ENCODE measurements at regions of chr17 and their contacts with region 1.

Region 1: DNA sequence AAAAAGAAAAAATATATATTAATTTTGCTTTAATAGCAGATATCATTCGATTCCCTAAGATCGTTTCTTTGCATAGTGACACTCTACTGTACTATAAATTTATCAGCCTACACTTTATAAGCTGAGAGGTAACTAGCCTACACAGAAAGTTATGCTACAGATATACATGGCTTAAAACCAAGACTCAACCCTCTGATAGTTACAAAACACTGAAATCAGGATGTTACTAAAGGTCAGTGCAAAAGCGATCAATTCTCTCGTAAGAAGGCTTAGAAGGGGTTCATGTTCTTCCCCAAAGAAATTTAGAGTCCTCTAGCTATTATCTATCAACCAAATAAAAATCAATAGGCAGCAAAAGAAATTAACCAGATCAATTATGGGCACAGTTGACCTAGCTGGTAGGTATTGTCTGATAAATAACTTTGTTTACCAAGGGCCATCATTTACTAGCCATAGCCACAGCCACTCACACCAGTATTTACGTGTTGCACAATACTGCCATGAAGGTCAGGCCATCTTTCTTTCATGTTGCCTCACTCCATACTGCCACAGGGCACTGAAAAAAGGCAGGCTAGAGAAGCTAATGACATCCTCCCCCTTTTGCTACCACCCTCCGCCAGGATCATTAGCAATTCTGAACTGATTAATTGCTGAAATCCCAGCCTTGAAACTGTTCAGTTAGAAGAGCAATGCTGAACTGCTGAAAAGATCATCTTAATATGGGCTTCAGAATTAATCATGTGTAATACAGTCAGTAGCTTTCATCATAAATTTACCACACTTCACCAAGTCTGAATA is 43.7 kb downstream of the RND2 start:
- DNase-seq: no peak
- ATAC-seq: peak in 5 of 8 donors; percentile 25 to 90 (median 72)
- H3K4me3 ChIP-seq: no peak overlapping the region
- H3K27ac ChIP-seq: peak overlapping the region in 7 of 10 donors; percentile 5 to 59 (median 48)
- H3K4me1 ChIP-seq: peaks cover 0 to 21% (median 0%) of the 10 kb centered on the region in 9 donors
- H3K27me3 ChIP-seq: no peaks in the 10 kb centered on the region
- CTCF ChIP-seq: no peak

Region 2: DNA sequence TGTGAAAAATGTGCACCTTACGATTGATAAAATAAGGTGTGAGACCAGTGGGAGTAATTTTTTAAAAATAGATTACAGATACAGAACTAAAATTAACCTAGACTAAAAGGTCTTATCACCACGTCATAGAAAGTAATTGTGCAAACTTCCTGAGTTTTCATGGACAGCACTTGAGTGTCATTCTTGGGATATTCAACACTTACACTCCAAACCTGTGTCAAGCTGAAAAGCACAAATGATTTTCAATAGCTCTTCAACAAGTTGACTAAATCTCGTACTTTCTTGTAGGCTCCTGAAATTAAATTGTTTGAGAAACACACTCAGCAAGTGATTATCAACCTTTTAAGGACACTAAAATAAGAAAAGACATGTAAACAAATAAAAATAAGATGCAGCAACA is 35.9 kb after region 1 on chr17:
- intact Hi-C with region 1: loop called in 1 of 10 experiments (anchors 1 kb)
- DNase-seq: no peak
- ATAC-seq: no peak
- H3K4me3 ChIP-seq: no peak overlapping the region
- H3K27ac ChIP-seq: no peak overlapping the region
- H3K4me1 ChIP-seq: peaks cover 0 to 6% (median 0%) of the 10 kb centered on the region in 9 donors
- H3K27me3 ChIP-seq: no peaks in the 10 kb centered on the region
- CTCF ChIP-seq: no peak

Measured in heart right ventricle (tissue), 16 donors.